Posterior cingulate gyrus (tissue), 11 donors: ENCODE measurements at regions of chr7 and their contacts with region 1.

Region 1: GRCh38 chr7:30800785-30801252 is 29.6 kb downstream of the MINDY4 start:
- DNase-seq: peak in 6 of 10 donors; percentile 50 to 89 (median 62)

Region 2: DNA sequence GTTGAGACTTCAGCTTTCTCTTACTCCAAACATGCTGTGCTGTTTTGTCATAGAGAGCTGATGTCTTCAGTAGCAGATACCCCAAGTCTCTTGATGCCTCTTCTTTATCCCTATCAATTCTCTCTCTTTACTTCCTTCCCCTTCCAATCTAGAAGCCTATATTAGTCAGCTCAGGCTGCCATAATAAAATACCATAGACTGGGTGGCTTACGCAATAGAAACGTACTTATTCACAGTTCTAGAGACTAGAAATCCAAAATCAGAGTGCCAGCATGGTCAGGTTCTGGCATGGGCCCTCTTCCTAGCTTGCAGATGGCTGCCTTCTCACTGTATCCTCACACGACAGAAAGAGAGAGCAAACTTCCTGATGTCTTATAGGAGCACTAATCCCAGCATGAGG is 215.1 kb before region 1 on chr7:
- intact Hi-C with region 1: no loop called
- DNase-seq: no peak

Region 3: GRCh38 chr7:30974605-30975255 is 173.9 kb after region 1 on chr7:
- intact Hi-C with region 1: loop called (anchors 5 kb)
- DNase-seq: peak in 1 of 10 donors; percentile 67